CD4-positive, alpha-beta memory T cell (primary cell): ENCODE measurements at regions of chr12 and their contacts with region 1.

Region 1: DNA sequence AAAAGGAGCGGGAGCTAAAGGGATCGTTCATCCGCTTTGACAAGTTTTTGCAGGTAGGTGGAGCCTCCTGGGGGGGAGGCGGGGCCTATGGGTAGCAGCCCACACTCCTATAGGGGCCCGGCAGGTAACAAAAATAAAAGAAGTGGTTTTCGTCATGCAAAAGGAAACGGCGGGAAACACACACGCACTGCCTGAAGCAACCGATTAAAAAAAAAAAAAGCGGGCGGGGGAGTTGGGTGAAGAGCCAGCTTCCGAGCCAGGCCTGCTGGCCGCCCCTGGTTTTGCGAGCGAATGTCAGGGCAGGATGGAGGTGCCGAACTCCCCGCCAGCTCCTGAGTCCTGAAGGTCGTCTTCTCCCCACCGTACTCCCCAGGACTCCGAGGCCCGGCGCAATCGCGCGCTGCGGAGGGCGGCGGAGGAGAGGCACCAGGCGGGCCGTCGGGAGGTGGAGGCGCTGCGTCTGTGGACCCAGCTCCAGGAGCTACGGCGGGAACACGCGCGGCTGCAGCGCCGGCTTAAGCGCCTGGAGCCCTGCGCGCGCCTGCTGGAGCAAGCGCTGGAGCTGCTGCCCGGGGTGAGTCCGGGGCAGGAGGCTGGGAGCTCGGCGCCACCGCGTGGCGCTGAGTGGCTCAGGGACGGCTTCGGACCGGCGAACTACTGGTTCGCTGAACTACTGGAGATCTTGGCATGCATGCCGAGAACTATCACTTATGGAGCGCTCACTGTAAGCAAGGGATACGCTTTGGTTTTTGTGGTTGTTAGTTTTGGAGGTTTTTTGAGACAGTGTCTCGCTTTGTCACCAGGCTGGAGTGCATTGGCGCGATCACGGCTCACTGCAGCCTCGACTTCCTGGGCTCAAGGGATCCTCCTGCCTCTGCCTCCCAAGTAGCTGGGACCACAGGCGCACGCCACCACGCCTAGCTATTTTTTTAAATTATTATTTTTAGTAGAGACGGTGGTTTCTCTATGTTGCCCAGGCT is 3.6 kb downstream of the CFAP73 start:
- DNase-seq: peak; percentile 70 to 85 (median 74)
- H3K4me3 ChIP-seq: peak overlapping the region in 1 of 2 donors; percentile 57
- H3K4me3 Mint-ChIP-seq: peak overlapping the region; percentile 73 to 87 (median 85)
- H3K27ac ChIP-seq: peak overlapping the region; percentile 30
- H3K27ac Mint-ChIP-seq: peak overlapping the region in 6 of 7 donors; percentile 9 to 86 (median 75)
- H3K4me1 ChIP-seq: peaks cover 20% of the 10 kb centered on the region
- H3K4me1 Mint-ChIP-seq: peaks cover 9 to 29% (median 13%) of the 10 kb centered on the region in 4 donors
- H3K27me3 ChIP-seq: peaks cover 6% of the 10 kb centered on the region
- H3K27me3 Mint-ChIP-seq: peaks cover 0 to 9% of the 10 kb centered on the region in 2 donors

Region 2: DNA sequence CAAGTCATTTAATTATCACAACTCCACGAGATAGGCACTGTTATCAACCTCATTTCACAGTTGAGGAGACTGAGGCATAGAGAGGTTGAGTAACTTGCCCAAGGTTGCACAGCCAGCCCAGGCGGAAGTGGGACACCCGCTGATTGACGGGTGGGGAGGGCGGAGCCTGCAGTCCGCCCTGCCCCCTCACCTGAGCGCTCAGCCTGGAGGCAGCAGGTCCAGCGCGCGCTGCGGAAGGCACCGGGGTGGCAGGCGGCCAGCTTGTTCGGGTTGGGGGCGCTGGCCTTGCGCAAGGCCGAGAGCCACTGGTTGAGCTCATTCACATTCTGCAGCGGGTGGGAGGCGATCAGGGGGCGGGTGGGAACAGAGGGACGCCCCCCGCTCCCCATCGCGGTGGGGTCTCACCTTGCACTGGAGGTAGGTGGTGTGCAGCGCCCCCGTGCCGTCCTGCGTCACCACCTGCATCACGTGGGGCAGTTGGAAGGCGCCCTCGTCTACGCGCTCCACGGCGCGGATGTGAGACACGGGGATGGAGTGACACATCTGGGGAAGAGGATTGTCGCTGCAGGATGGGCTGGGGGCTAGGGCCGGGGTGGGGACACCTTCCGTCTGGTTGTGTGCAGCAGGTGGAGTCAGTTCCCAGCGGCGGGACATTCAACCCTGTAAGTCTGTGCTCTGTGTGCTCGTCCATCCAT is 49.2 kb before region 1 on chr12:
- CTCF ChIA-PET with region 1: interaction called, 5 read pairs
- POLR2A ChIA-PET with region 1: interaction called, 5 read pairs
- intact Hi-C with region 1: loop called (anchors 5 kb)
- DNase-seq: peak; percentile 67 to 78 (median 74)
- H3K4me3 ChIP-seq: peak overlapping the region in 1 of 2 donors; percentile 64
- H3K4me3 Mint-ChIP-seq: peak overlapping the region; percentile 80 to 89 (median 86)
- H3K27ac ChIP-seq: peak overlapping the region; percentile 1
- H3K27ac Mint-ChIP-seq: peak overlapping the region; percentile 66 to 94 (median 87)
- H3K4me1 ChIP-seq: peaks cover 6% of the 10 kb centered on the region
- H3K4me1 Mint-ChIP-seq: peaks cover 9 to 24% (median 14%) of the 10 kb centered on the region in 4 donors
- H3K27me3 ChIP-seq: no peaks in the 10 kb centered on the region
- H3K27me3 Mint-ChIP-seq: peaks cover 0 to 1% of the 10 kb centered on the region in 2 donors

Region 3: GRCh38 chr12:113135178-113136127 is 17.7 kb before region 1 on chr12 and contains the start of gene RASAL1:
- CTCF ChIA-PET with region 1: interaction called, 15 read pairs
- POLR2A ChIA-PET with region 1: no interaction called
- intact Hi-C with region 1: no loop called
- DNase-seq: peak; percentile 65 to 83 (median 70)
- H3K4me3 ChIP-seq: peak within 1 kb of the TSS; percentile 34
- H3K4me3 Mint-ChIP-seq: peak within 1 kb of the TSS; percentile 56 to 90 (median 80)
- H3K27ac ChIP-seq: no peak within 1 kb of the TSS
- H3K27ac Mint-ChIP-seq: peak within 1 kb of the TSS; percentile 26 to 91 (median 84)
- H3K4me1 ChIP-seq: peaks cover 20% of the 10 kb centered on the region
- H3K4me1 Mint-ChIP-seq: peaks cover 4 to 19% (median 11%) of the 10 kb centered on the region in 4 donors
- H3K27me3 ChIP-seq: no peaks in the 10 kb centered on the region
- H3K27me3 Mint-ChIP-seq: peaks cover 3% of the 10 kb centered on the region in 2 donors
- total RNA-seq, gene RASAL1: 0.58 to 1.4 TPM